Mammary epithelial cell (primary cell): ENCODE measurements at regions of chr1 and their contacts with region 1.

Region 1: GRCh38 chr1:46236882-46237281 is 10.7 kb upstream of the RAD54L start:
- DNase-seq: no peak
- H3K4me3 ChIP-seq: no peak overlapping the region
- H3K27ac ChIP-seq: no peak overlapping the region
- H3K4me1 ChIP-seq: no peaks in the 10 kb centered on the region
- H3K27me3 ChIP-seq: no peaks in the 10 kb centered on the region
- CTCF ChIP-seq: no peak

Region 2: GRCh38 chr1:46188295-46189030 is 48.4 kb before region 1 on chr1:
- CTCF ChIA-PET with region 1: no interaction called
- dilution Hi-C with region 1: no loop called
- in situ Hi-C with region 1: loop called in 1 of 2 experiments (anchors 5 kb)
- intact Hi-C with region 1: no loop called
- DNase-seq: no peak
- H3K4me3 ChIP-seq: no peak overlapping the region
- H3K27ac ChIP-seq: peak overlapping the region; percentile 41
- H3K4me1 ChIP-seq: peaks cover 65% of the 10 kb centered on the region
- H3K27me3 ChIP-seq: no peaks in the 10 kb centered on the region
- CTCF ChIP-seq: peak; percentile 18 to 28